HCT116 (cell line): ENCODE measurements at regions of chr2 and their contacts with region 1.

Region 1: DNA sequence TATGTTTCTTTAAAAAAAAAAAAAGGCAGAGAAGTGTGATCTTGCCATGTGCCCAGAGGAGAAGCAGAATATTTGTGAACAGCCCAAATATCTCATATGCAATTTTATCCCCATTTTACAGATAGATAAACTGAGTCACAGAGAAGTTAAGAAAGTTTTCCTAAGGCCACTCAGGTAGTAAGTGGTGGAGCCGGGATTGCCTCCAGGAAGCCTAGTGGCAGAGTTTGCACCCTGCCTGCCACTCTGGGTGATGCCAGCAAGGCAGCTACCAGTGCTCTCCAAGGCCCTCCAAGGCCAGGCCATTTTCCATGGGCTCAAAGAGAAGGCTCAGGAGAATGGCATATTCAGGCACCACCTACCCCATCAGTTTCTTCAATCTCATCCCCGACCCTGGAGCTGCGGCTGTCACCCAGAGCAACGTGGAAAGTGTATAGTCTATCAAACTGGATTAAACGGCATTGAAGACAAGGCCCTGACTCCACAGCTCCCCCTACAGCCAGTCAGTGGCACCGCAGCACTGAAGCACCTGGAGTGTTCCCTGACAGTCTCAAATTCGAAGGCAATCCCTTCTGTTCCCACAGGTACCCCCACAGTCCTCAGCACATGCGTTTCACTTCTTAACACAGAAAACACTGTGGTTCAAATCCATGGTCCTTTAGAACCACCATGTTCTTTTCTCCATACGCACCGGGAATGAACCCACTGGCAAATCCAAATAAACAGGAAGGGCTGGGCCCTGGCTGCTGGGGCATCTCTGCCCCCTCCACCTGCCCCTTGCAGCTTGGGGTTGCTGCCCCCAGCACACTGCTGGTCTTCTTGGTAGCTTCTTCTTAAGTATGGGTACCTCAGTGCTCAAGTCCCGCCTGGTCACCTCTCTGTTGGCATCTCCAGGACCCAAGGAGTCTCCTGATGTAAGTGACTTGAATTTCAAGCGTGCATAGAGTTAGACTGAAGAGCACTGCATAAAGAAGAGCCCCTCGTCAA is 175.3 kb downstream of the INHBB start:
- DNase-seq: peak; percentile 47
- ATAC-seq: peak; percentile 92
- H3K4me3 ChIP-seq: no peak overlapping the region
- H3K27ac ChIP-seq: no peak overlapping the region
- H3K4me1 ChIP-seq: peaks cover 4 to 7% of the 10 kb centered on the region in 2 experiments; a peak in 3 of 4 replicates
- H3K27me3 ChIP-seq: no peaks in the 10 kb centered on the region
- CTCF ChIP-seq: peak; percentile 56 to 99 (median 95); a peak in 5 of 6 replicates
- POLR2A ChIP-seq: no peak
- RAD21 ChIP-seq: peak; percentile 61

Region 2: DNA sequence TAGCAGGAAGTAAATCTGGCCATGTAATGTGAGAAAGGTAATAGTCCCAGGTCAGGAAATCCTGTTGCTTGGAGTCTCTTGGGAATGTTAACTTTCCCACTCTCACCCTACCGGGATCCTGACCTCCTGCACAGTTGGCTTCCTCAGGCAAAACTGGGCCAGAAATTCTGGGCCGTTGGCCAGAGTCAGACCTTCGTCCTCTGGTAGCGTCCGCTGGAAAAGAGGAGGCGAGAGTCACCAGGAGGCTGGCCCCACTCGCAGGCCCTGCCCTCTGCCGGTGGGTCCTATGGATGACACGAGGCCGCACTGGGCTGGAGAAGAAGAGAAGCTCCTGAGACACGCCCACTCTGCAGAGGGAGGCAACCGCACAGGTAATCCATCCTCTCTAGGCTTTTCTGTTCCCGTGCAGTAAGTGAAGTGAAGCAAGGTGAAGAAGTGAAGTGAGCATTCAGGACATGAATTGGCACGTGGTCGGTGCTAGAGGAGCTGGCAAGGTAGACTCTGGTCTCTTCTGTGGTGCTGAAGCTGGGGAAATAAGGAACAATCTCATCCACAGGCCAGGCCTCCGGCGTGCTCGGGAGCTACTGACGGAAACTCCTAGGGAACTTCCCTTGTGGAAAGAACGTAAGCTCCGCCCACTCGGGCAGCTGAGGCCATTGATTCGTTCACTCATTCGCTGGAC is 31.7 kb after region 1 on chr2:
- CTCF ChIA-PET with region 1: interaction called, 10 read pairs
- POLR2A ChIA-PET with region 1: no interaction called
- RAD21 ChIA-PET with region 1: no interaction called
- intact Hi-C with region 1: no loop called
- DNase-seq: peak; percentile 84
- ATAC-seq: peak; percentile 100
- H3K4me3 ChIP-seq: peak overlapping the region; percentile 37 to 48
- H3K27ac ChIP-seq: no peak overlapping the region
- H3K4me1 ChIP-seq: peaks cover 4 to 16% of the 10 kb centered on the region in 2 experiments; a peak in 3 of 4 replicates
- H3K27me3 ChIP-seq: no peaks in the 10 kb centered on the region
- CTCF ChIP-seq: peak; percentile 66 to 85 (median 72); a peak in 5 of 6 replicates
- POLR2A ChIP-seq: no peak
- RAD21 ChIP-seq: peak; percentile 68